PC-9 (cell line): ENCODE measurements at regions of chr18 and their contacts with region 1.

Region 1: DNA sequence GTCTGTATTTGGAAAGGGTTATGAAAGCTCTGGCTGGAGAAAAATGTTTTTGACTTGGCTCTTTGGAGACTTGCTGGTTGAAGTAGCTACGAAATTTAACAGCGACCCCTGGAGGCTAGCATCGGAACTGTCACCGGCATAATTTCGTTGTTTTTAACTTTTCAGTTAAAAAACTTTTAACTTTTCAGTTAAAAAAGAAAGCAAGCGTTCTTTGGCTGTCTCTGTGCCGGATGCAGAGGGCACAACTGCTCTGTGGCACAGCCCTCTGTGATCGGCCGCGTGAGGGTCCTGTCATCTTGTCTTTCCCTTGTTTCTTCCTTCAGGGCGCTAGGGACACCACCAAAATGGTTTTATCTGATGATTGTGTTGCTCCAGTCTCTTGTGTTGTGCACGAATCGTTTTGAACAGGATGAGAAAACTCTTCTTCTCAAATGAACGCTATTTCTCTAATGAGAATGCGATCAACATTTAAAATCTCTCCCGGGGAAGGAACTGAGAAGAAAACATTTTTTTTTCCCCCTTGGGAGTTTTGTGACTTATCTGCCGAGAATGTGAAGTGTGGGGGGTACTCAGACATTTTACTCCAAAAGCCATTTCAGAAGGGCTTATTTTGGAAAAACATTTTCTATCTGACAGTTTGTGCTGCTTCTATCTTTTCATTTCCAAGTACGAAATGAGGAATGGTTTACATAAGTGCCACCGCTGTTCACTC is 57.1 kb downstream of the ADCYAP1 start:
- DNase-seq: peak in 1 of 2 experiments; percentile 49
- H3K4me3 ChIP-seq: peak overlapping the region; percentile 41; the same call in 1 of the 2 replicates
- H3K27ac ChIP-seq: no peak overlapping the region
- H3K4me1 ChIP-seq: no peaks in the 10 kb centered on the region
- H3K27me3 ChIP-seq: no peaks in the 10 kb centered on the region
- CTCF ChIP-seq: peak; percentile 98

Region 2: GRCh38 chr18:741931-742512 is 219.8 kb before region 1 on chr18:
- CTCF ChIA-PET with region 1: no interaction called
- POLR2A ChIA-PET with region 1: no interaction called
- intact Hi-C with region 1: no loop called
- DNase-seq: peak in 1 of 2 experiments; percentile 36
- H3K4me3 ChIP-seq: no peak overlapping the region
- H3K27ac ChIP-seq: no peak overlapping the region
- H3K4me1 ChIP-seq: no peaks in the 10 kb centered on the region
- H3K27me3 ChIP-seq: no peaks in the 10 kb centered on the region
- CTCF ChIP-seq: peak; percentile 91

Region 3: DNA sequence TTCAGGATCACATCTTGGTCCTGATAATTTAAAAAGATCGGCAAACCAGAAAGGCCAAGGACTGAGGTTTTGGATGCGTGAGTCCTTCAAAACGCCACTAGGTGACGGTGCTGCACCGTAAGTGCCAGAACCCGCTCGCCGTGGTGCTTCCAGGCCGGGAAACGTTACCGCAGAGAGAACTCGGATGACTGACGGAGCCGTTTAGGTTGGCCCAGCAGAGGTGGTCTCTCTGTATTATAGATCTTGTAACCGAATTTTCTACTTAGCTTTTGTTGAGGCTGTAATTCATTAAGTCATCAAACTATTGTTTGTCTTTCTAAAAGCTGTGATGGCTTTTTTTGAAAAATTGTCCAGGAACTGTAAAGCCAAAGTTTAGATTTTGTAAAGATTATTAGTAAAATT is 96.9 kb before region 1 on chr18:
- CTCF ChIA-PET with region 1: no interaction called
- POLR2A ChIA-PET with region 1: no interaction called
- intact Hi-C with region 1: loop called (anchors 2 kb)
- DNase-seq: peak; percentile 52 to 68
- H3K4me3 ChIP-seq: no peak overlapping the region
- H3K27ac ChIP-seq: no peak overlapping the region
- H3K4me1 ChIP-seq: no peaks in the 10 kb centered on the region
- H3K27me3 ChIP-seq: no peaks in the 10 kb centered on the region
- CTCF ChIP-seq: peak; percentile 96

Region 4: GRCh38 chr18:903701-904100 is 58.1 kb before region 1 on chr18:
- CTCF ChIA-PET with region 1: interaction called, 4 read pairs
- POLR2A ChIA-PET with region 1: no interaction called
- intact Hi-C with region 1: loop called (anchors 2 kb)
- DNase-seq: peak in 1 of 2 experiments; percentile 48
- H3K4me3 ChIP-seq: no peak overlapping the region
- H3K27ac ChIP-seq: no peak overlapping the region
- H3K4me1 ChIP-seq: no peaks in the 10 kb centered on the region
- H3K27me3 ChIP-seq: peaks cover 5% of the 10 kb centered on the region; the same call in 1 of the 2 replicates
- CTCF ChIP-seq: no peak

Region 5: GRCh38 chr18:1018181-1018681 is 56.4 kb after region 1 on chr18:
- CTCF ChIA-PET with region 1: no interaction called
- POLR2A ChIA-PET with region 1: interaction called, 15 read pairs
- intact Hi-C with region 1: no loop called
- DNase-seq: no peak
- H3K4me3 ChIP-seq: no peak overlapping the region
- H3K27ac ChIP-seq: no peak overlapping the region
- H3K4me1 ChIP-seq: peaks cover 10% of the 10 kb centered on the region
- H3K27me3 ChIP-seq: no peaks in the 10 kb centered on the region
- CTCF ChIP-seq: no peak